ENCODE measurements at regions of chr1 and their contacts with region 1.

Region 1: DNA sequence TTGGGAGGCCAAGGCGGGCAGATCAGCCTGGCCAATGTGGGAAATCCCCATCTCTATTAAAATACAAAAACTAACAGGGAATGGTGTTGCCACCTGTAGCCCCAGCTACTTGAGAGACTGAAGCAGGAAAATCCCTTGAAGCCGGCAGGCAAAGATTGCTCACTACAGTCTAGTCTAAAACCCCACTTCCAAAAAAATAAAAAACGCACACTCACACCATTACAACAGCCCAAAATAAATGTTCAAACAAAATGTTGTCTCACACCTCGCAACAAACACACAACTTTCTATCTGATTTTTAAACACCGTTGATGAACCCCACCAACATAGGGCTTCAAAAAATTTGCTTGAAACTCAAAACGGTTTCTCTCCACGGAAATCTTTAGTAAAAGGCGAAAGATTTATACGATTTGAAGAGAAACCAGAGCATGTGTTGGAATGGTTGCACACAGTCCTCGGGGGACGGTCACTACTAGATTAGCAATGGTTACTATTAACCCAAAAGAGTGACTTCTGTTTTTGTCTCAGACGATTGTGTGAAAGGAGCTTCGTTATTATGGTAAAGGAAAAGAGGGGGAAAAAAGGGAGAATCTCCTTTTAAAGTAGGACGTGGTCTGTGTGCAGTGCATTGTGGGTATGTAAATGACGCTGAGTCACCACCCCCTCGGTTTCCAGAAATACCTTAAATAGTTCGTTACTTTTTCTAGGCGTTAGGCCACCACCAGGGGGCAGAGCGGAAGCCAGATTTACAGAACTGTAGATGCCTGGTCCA is at the start of gene RNU5D-1:
- DNase-seq: peak; percentile 97
- ATAC-seq: peak; percentile 75
- H3K4me3 ChIP-seq: no peak within 1 kb of the TSS
- H3K27ac ChIP-seq: peak within 1 kb of the TSS; percentile 99
- H3K4me1 ChIP-seq: peaks cover 15% of the 10 kb centered on the region
- H3K27me3 ChIP-seq: no peaks in the 10 kb centered on the region
- CTCF ChIP-seq: peak; percentile 82
- total RNA-seq, gene RNU5D-1: not detected in 2 replicates

Region 2: GRCh38 chr1:44377925-44378784 is 352.8 kb before region 1 on chr1:
- CTCF ChIA-PET with region 1: interaction called, 11 read pairs
- POLR2A ChIA-PET with region 1: no interaction called
- intact Hi-C with region 1: no loop called
- DNase-seq: peak; percentile 76
- ATAC-seq: peak; percentile 53
- H3K4me3 ChIP-seq: no peak overlapping the region
- H3K27ac ChIP-seq: no peak overlapping the region
- H3K4me1 ChIP-seq: no peaks in the 10 kb centered on the region
- H3K27me3 ChIP-seq: no peaks in the 10 kb centered on the region
- CTCF ChIP-seq: peak; percentile 88

Region 3: DNA sequence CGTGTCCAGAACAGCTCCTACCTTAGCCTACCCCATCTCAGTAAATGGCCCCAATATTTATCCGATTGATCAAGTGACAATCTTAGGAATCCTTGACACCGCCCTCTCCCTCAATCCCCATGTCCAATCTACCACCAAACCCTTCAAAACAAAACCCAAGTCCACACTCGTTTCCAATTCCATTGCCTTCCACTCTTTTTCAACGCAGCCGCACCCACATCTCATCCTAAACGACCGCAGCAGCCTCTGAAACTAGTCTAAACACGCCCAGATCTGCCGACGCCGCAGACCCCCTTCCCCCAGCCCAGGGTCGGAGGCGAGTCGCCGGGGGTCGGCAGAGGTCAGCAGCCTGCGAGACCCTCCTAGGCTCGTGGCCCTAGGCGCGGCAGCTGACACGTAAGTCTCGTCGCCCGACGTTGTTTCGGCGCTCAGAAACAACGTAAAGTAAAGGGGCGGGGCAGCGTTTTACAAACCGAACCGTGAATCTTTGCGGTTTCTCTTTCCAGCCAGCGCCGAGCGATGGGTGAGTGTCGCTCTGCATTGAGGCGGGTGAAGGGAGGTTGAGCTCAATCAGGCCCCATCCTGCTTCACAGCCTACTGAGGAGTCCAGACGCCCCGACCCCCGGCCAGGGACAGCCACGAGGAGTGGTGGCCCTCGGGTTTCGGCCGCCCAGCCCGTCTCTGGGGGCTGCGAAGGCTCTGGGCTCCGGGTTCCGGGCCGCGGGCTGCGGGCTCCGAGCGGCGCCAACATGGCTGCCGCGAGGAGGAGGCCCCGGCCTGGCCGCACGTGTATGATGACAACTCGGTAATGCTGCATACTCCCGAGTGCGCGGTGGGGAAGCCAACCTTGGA is 44.4 kb after region 1 on chr1 and contains the start of gene RPS8:
- CTCF ChIA-PET with region 1: interaction called, 4 read pairs
- POLR2A ChIA-PET with region 1: interaction called, 4 read pairs
- intact Hi-C with region 1: loop called (anchors 2 kb)
- DNase-seq: peak; percentile 95
- ATAC-seq: peak; percentile 83
- H3K4me3 ChIP-seq: peak within 1 kb of the TSS; percentile 89
- H3K27ac ChIP-seq: peak within 1 kb of the TSS; percentile 63
- H3K4me1 ChIP-seq: peaks cover 15% of the 10 kb centered on the region
- H3K27me3 ChIP-seq: no peaks in the 10 kb centered on the region
- CTCF ChIP-seq: no peak
- total RNA-seq, gene RPS8: 1,533 and 1,663 TPM in 2 replicates

Region 4: DNA sequence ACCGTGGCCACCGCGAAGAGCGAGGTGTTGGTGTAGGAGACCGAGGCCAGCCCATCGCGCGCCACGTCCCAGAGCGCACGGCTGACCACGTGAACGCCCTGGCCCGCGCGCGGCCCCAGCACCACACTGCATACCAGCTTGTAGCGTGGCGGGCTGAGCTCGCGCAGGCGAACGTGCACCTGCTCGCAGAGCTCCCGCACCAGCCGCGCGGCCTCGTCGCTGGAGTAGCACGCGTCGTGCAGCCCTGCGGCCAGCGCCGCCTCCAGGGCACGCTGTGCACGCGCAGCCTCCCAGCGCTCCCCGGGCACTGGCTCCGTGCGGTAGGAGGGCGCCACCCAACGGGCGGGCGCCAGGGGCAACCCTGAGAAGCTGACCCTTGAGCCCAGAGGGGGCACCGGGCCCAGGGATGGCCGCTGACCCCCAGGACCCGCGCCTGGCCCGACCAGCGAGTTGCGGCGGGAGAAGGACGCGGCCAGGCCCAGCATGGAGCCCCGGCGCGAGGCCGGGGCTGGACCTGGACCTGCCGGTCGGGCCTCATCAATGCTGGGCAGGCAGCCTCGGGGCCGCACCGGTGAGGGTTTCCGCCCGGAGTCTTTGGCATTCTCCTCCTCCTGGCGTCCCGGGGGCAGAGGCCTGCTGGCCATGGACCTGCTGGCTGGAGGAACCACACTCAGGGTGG is 75.2 kb after region 1 on chr1:
- CTCF ChIA-PET with region 1: no interaction called
- POLR2A ChIA-PET with region 1: no interaction called
- intact Hi-C with region 1: no loop called
- DNase-seq: no peak
- ATAC-seq: no peak
- H3K4me3 ChIP-seq: no peak overlapping the region
- H3K27ac ChIP-seq: peak overlapping the region; percentile 98
- H3K4me1 ChIP-seq: peaks cover 47% of the 10 kb centered on the region
- H3K27me3 ChIP-seq: no peaks in the 10 kb centered on the region
- CTCF ChIP-seq: no peak; the same call in 1 of the 2 replicates

Region 5: DNA sequence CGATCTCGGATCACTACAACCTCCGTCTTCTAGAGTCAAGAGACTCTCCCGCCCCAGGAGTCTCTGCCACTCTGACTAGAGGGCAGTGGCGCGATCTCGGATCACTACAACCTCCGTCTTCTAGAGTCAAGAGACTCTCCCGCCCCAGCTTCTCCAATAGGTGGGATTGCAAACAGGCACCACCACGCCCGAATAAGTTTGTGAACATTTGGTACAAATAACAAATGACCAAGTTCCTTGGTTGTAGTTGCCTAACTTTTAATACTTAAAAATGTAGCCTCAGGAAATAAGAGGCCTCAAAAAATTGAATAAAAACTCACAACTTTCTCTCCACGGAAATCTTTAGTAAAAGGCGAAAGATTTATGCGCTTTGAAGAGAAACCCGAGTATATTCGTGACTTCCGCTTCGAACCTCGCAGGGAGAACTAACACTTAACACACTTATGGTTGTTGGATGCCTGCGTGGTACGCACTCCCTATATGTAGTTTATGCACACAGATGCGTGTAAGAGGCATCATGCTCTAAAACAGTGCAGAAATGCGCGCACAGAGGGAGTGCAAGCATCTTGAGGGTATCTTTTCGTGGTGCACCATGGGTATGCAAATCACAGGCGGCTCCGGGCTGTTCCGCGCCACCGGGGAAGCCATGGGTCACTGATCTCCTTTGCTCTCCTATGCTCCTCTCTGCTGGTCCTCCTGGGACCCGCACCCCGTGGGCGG is 88.8 kb after region 1 on chr1:
- CTCF ChIA-PET with region 1: interaction called, 15 read pairs
- POLR2A ChIA-PET with region 1: no interaction called
- intact Hi-C with region 1: no loop called
- DNase-seq: peak; percentile 84
- ATAC-seq: peak; percentile 87
- H3K4me3 ChIP-seq: peak overlapping the region; percentile 61
- H3K27ac ChIP-seq: peak overlapping the region; percentile 76
- H3K4me1 ChIP-seq: peaks cover 7% of the 10 kb centered on the region; the same call in 1 of the 2 replicates
- H3K27me3 ChIP-seq: no peaks in the 10 kb centered on the region
- CTCF ChIP-seq: no peak